Ascending aorta (tissue), 2 donors: ENCODE measurements at regions of chr12 and their contacts with region 1.

Region 1: DNA sequence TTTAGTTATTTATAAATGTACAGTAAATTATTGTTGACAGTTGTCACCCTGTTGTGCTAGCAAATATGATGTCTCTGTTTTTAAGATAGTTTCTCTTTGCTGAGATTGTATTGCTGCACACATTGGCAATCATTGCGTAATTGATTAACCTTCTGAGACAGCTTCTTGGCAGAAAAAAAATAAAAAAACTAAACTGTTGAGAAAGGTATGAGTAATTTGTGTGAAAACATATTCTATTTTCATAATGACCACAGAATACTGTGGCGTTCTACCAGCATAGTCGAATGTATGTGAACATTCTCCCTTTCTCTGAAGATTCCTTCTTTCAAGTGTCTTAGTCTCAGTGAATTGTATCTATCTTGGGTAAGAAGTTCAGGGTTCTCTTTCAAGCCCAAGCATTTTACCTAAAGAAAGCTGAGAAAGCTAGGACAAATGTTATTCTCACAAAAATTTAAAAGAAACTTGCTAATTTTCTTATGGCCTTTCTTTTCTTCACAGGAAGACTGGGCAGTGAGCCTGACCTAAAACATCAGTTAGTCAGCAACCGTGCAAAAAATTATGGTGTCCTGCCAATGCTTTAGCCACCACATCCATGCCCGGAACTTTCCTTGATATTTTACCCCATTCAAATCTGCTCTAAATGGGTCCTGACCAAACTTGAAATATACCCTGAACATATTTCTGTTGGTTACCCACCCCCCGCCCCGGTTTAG is 69.0 kb upstream of the REP15 start:
- DNase-seq: peak in 1 of 2 donors; percentile 85
- H3K4me3 ChIP-seq: peak overlapping the region in 1 of 2 donors; percentile 15
- H3K27ac ChIP-seq: peak overlapping the region; percentile 87 to 88
- H3K4me1 ChIP-seq: peaks cover 10 to 58% of the 10 kb centered on the region in 2 donors
- H3K27me3 ChIP-seq: no peaks in the 10 kb centered on the region
- CTCF ChIP-seq: no peak

Region 2: DNA sequence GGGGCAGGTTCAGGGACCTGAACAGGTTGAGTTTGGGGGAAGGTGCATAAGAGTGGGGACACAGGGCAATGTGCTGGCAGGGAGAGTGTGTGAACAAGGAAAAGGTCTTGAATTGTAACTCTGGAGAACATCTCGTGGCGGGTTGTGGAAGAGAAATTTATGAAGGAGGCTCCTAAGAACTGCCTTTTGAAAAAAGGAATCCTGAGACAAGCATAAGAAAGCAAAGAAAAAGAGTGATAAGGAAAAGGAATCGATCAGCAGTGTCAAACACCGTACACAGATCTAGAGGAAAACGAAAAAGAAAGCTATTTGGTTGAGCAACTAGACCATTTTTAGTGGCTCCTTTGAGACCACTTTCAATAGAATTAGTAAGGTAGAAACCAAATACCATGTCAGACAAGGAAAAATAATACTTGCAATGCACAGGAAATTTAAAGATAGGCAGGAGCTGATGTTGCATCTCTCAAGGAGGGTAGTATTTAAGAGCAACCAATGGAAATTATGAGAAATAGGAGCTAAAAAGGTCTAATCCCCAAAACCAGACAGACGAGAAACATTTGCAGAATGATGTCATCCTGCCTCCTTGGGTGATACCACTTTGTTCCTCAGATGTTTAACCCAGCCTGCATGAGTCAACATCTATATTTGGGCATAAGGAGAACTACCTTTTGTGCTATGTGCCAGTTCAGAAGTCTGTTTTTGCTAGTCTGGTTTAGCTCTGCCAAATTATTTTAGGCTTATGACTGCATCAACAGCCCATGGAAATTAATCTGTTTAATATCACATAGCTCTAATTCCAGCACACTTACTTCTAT is 447.7 kb before region 1 on chr12:
- intact Hi-C with region 1: loop called (anchors 10 kb)
- DNase-seq: no peak
- H3K4me3 ChIP-seq: peak overlapping the region in 1 of 2 donors; percentile 31
- H3K27ac ChIP-seq: peak overlapping the region; percentile 92 to 95
- H3K4me1 ChIP-seq: peaks cover 19 to 34% of the 10 kb centered on the region in 2 donors
- H3K27me3 ChIP-seq: no peaks in the 10 kb centered on the region
- CTCF ChIP-seq: no peak

Region 3: GRCh38 chr12:27383429-27384260 is 243.6 kb before region 1 on chr12:
- intact Hi-C with region 1: no loop called
- DNase-seq: peak; percentile 15 to 89
- H3K4me3 ChIP-seq: no peak overlapping the region
- H3K27ac ChIP-seq: no peak overlapping the region
- H3K4me1 ChIP-seq: no peaks in the 10 kb centered on the region
- H3K27me3 ChIP-seq: no peaks in the 10 kb centered on the region
- CTCF ChIP-seq: peak; percentile 60 to 88 (median 86)

Region 4: GRCh38 chr12:27523642-27524493 is 103.4 kb before region 1 on chr12 and contains the start of gene PPFIBP1:
- intact Hi-C with region 1: loop called (anchors 2 kb)
- DNase-seq: peak; percentile 99 to 100
- H3K4me3 ChIP-seq: peak within 1 kb of the TSS; percentile 77 to 79
- H3K27ac ChIP-seq: peak within 1 kb of the TSS; percentile 88 to 90
- H3K4me1 ChIP-seq: peaks cover 3 to 16% of the 10 kb centered on the region in 2 donors
- H3K27me3 ChIP-seq: no peaks in the 10 kb centered on the region
- CTCF ChIP-seq: peak in 2 of 3 experiments; percentile 31 to 44
- total RNA-seq, gene PPFIBP1: 56.4 TPM

Region 5: GRCh38 chr12:27549801-27550652 is 77.3 kb before region 1 on chr12:
- intact Hi-C with region 1: loop called (anchors 2 kb)
- DNase-seq: peak; percentile 31 to 94
- H3K4me3 ChIP-seq: peak overlapping the region in 1 of 2 donors; percentile 37
- H3K27ac ChIP-seq: peak overlapping the region; percentile 73 to 76
- H3K4me1 ChIP-seq: peaks cover 12 to 76% of the 10 kb centered on the region in 2 donors
- H3K27me3 ChIP-seq: no peaks in the 10 kb centered on the region
- CTCF ChIP-seq: no peak

Region 6: DNA sequence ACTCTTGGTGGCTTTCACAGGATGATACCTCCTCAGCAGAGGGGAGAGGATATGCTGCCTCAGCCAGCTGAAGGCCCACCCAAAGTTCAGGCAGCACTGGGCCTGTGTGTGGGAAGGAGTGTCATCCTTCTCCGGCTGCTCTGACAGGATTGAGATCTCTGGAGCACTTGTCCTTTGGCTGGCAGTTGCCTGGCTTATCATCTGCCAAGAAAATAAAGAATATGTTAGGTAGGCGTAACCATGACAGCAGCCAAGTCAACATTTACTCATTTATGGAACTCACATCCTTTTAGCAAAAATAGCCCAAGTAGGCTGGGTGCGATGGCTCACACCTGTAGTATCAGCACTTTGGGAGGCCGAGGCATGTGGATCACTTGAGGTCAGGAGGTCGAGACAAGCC is 34.7 kb before region 1 on chr12:
- intact Hi-C with region 1: loop called (anchors 5 kb)
- DNase-seq: peak in 1 of 2 donors; percentile 86
- H3K4me3 ChIP-seq: no peak overlapping the region
- H3K27ac ChIP-seq: peak overlapping the region; percentile 54 to 64
- H3K4me1 ChIP-seq: peaks cover 2 to 26% of the 10 kb centered on the region in 2 donors
- H3K27me3 ChIP-seq: no peaks in the 10 kb centered on the region
- CTCF ChIP-seq: no peak

Region 7: GRCh38 chr12:27751386-27752047 is 124.2 kb after region 1 on chr12:
- intact Hi-C with region 1: no loop called
- DNase-seq: no peak
- H3K4me3 ChIP-seq: no peak overlapping the region
- H3K27ac ChIP-seq: no peak overlapping the region
- H3K4me1 ChIP-seq: peaks cover 4 to 19% of the 10 kb centered on the region in 2 donors
- H3K27me3 ChIP-seq: no peaks in the 10 kb centered on the region
- CTCF ChIP-seq: no peak

Region 8: DNA sequence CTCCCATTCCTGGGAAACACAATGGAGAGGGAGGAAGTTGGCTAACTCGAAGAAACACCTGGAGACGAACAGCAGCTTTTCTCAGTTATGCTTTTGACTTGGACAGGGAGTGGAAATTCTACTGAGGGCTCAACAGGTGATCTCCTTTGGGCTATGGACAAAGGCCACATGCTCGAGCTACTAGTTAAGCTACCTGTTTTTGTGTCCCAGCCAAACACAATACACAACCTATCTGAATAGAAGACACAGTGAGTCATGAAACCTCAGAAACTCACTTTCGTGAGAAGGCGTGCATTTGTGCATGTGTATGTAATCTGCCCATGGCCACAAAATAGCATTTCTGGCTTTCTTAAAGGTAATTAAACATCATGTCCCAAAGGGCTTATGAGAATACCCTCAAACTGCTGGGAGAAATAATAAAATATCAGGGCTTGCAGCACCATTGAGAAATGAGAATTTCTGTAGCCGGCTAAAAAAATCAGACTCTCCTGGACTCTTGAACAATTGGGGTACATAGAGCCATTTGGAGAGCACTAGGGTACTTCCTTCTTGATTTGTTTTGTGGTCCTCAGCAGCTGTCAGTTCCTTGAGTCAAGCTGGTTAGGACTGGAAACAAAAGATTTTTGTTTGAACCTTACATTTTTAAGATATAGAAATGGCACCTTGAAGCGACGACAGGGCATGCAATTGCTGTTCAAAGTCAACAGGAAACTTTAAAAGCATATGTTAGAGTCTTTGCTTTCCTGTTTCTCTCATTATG is 430.8 kb after region 1 on chr12:
- intact Hi-C with region 1: no loop called
- DNase-seq: no peak
- H3K4me3 ChIP-seq: no peak overlapping the region
- H3K27ac ChIP-seq: no peak overlapping the region
- H3K4me1 ChIP-seq: no peaks in the 10 kb centered on the region
- H3K27me3 ChIP-seq: no peaks in the 10 kb centered on the region
- CTCF ChIP-seq: no peak